Posterior vena cava (tissue), 2 donors: ENCODE measurements at regions of chr13 and their contacts with region 1.

Region 1: DNA sequence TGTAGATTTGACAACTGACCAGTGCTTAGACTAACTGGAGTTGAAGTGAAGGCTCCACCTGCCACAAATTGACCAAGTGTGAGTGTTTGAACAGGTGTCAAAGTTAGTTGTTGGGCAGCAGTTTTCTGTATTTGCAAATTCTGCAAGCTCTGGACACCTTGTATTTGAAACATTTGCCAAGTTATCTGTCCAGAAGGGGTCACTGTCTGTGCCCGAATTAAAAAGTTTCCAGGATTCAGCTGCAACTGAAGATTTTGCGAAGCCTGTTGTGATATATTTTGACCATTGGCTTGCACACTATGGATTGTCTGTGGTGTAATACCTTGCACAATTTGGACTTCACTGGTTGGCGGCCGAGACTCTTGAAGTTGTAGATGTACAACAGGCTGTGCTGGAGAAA is 1690.7 kb downstream of the SLITRK5 start:
- DNase-seq: no peak

Region 2: GRCh38 chr13:89029062-89029461 is 332.8 kb before region 1 on chr13:
- intact Hi-C with region 1: no loop called
- DNase-seq: no peak

Region 3: DNA sequence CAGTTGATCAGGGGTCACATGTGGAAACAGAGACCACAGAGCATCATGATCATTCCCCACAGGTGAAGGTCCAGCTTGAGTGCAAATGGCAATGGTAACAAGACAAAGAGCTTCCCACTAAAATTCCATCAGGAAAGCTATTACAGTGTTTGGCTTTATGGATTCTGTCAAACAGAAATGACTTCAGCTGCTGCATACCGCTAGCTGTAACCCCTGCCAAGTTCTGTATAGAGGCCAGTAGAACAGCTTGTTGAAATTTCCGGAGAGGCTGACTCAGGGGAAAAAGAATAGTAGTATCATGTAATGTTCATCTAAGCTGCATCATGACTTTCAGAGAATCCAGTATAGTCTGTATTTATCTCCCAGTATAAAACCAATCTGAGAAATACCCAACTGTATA is 13.9 kb after region 1 on chr13:
- intact Hi-C with region 1: loop called in 1 of 2 experiments (anchors 1 kb)
- DNase-seq: no peak